IMR-90 (cell line): ENCODE measurements at regions of chr18 and their contacts with region 1.

Region 1: DNA sequence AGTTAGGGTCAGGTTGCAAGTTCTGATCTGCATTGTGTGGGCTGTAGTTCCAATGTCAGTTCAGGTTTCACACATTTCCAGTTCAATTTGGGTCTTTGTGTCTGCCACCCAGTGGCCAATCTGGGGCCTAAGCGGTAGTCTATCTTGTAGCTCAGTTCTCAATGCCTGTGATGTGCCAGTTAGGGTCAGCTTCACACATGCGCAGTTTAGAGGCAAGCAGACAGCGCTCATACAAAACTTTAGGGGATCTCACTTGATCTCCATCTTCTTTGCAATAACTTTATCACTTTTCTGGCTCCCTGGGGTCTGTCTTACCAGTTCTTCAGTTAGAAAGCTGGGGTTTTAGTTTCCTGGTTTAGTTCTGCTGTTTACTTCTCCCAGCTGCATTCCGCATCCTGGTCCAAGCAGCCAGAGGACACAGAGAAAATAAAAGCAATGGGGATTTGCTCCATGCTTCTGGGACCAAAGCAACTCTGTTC is 11.0 kb upstream of the ZNF24 start:
- DNase-seq: peak; percentile 83
- ATAC-seq: peak; percentile 100
- H3K4me3 ChIP-seq: peak overlapping the region; percentile 6; the same call in 1 of the 2 replicates
- H3K27ac ChIP-seq: no peak overlapping the region
- H3K4me1 ChIP-seq: no peaks in the 10 kb centered on the region
- H3K27me3 ChIP-seq: no peaks in the 10 kb centered on the region
- CTCF ChIP-seq: peak; percentile 78
- POLR2A ChIP-seq: no peak
- RAD21 ChIP-seq: peak; percentile 71

Region 2: DNA sequence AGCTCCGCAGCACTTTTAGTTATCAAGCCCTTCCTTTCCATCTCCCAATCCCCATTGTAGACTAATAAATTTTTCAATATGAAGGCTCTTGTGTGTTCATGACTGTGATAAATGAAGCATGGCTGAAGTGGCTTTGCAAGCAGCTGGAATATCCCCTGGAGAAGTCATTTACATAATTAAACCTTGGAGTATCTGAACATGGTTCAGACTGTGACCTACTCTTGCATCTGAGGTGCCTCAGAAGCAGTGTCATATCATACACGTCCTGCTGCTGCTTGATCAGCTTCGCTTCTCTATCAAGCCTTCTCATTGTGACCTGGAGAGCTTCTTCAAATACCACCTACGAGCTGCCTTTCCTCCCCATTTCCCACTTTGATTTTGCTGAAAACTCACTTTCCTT is 162.8 kb before region 1 on chr18:
- CTCF ChIA-PET with region 1: no interaction called
- POLR2A ChIA-PET with region 1: no interaction called
- dilution Hi-C with region 1: no loop called
- in situ Hi-C with region 1: no loop called
- intact Hi-C with region 1: no loop called
- DNase-seq: no peak
- ATAC-seq: no peak
- H3K4me3 ChIP-seq: no peak overlapping the region
- H3K27ac ChIP-seq: no peak overlapping the region
- H3K4me1 ChIP-seq: no peaks in the 10 kb centered on the region
- H3K27me3 ChIP-seq: peaks cover 2% of the 10 kb centered on the region; the same call in 1 of the 2 replicates
- CTCF ChIP-seq: no peak
- POLR2A ChIP-seq: no peak
- RAD21 ChIP-seq: no peak

Region 3: GRCh38 chr18:35231052-35231451 is 124.1 kb before region 1 on chr18:
- CTCF ChIA-PET with region 1: interaction called, 11 read pairs
- POLR2A ChIA-PET with region 1: no interaction called
- dilution Hi-C with region 1: no loop called
- in situ Hi-C with region 1: no loop called
- intact Hi-C with region 1: loop called (anchors 1 kb)
- DNase-seq: peak; percentile 63
- ATAC-seq: peak; percentile 96
- H3K4me3 ChIP-seq: no peak overlapping the region
- H3K27ac ChIP-seq: no peak overlapping the region
- H3K4me1 ChIP-seq: peaks cover 2% of the 10 kb centered on the region; the same call in 1 of the 2 replicates
- H3K27me3 ChIP-seq: no peaks in the 10 kb centered on the region
- CTCF ChIP-seq: peak; percentile 92
- POLR2A ChIP-seq: no peak
- RAD21 ChIP-seq: peak; percentile 94